CD8-positive, alpha-beta T cell (primary cell): ENCODE measurements at regions of chrX and their contacts with region 1.

Region 1: DNA sequence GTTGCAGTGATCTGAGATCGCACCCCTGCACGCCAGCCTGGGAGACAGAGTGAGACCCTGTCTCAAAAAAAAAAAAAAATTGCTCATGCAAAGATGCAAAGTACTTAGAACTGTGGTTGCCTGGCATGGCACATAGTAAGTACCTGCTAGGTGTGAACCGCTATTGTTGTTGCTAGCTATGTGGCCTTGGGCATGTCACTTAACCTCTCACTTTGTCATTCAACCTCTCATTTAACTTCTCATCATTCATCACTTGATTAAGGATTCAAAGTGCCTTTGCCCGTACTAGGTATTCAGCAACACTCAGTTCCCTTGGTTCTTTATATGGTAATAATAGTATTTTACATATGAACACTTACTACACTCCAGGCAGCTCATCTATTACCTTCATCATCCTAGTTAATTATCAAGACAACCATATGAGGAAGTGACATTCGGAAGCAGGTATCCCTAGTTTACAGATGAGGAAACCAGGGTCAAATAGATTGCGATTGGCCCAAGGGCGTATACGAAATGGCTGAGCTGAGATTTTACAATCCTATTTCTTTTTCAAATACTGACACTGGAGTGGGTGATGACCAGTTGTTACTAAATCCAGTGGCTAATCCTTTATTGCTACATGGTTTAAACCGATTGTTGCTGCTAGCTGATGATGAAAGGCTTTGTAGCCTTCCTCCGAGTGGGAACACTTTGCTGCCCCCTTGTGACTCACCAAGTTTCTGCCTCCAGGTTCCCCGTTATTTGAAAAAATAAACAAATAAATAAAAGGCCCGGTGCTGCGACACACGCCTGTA is 28.8 kb upstream of the SOWAHD start:
- DNase-seq: peak; percentile 28 to 79 (median 67)
- ATAC-seq: peak; percentile 60
- H3K4me3 ChIP-seq: no peak overlapping the region
- H3K4me3 Mint-ChIP-seq: no peak overlapping the region
- H3K27ac ChIP-seq: no peak overlapping the region
- H3K27ac Mint-ChIP-seq: no peak overlapping the region
- H3K4me1 ChIP-seq: peaks cover 5% of the 10 kb centered on the region
- H3K4me1 Mint-ChIP-seq: peaks cover 11% of the 10 kb centered on the region
- H3K27me3 ChIP-seq: no peaks in the 10 kb centered on the region
- H3K27me3 Mint-ChIP-seq: no peaks in the 10 kb centered on the region
- CTCF ChIP-seq: peak; percentile 63

Region 2: GRCh38 chrX:119516157-119516702 is 213.4 kb before region 1 on chrX:
- CTCF ChIA-PET with region 1: interaction called, 22 read pairs
- POLR2A ChIA-PET with region 1: interaction called, 4 read pairs
- intact Hi-C with region 1: loop called (anchors 1 kb)
- DNase-seq: peak in 8 of 9 experiments; percentile 6 to 75 (median 34)
- ATAC-seq: peak; percentile 96
- H3K4me3 ChIP-seq: no peak overlapping the region
- H3K4me3 Mint-ChIP-seq: no peak overlapping the region
- H3K27ac ChIP-seq: no peak overlapping the region
- H3K27ac Mint-ChIP-seq: no peak overlapping the region
- H3K4me1 ChIP-seq: no peaks in the 10 kb centered on the region
- H3K4me1 Mint-ChIP-seq: peaks cover 2% of the 10 kb centered on the region
- H3K27me3 ChIP-seq: no peaks in the 10 kb centered on the region
- H3K27me3 Mint-ChIP-seq: no peaks in the 10 kb centered on the region
- CTCF ChIP-seq: peak; percentile 64

Region 3: DNA sequence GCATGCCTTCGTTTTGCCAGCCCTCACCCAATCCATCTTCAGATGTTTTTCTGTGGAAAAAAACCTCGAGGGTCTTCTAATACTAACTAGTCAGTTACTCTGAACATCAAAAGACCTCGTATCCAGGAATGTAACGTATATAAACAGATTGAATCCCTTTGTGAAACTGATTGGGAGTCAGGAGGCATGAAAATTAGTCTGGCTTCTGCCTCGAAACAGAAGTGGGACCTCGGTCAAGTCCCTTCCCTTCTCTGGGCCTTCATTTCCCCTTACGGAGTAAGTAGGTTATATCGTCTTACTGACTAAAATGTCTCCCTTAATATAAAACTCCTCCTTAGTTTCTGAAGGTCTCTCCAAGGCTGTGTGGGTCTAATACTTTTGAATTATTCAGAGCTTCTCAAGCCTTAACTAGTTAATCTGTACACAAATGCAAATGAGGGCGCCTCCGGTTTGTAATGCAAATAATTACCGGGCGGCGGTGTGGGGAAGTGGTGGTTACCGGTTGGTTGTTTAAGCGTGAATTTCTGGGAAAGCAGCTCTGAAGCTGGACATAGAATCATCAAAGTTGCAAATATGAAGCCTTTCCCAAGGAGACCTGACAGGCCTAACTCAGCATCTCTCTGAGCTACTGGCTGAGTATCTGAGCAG is 112.0 kb before region 1 on chrX:
- CTCF ChIA-PET with region 1: interaction called, 5 read pairs
- POLR2A ChIA-PET with region 1: no interaction called
- intact Hi-C with region 1: loop called in 1 of 2 experiments (anchors 2 kb)
- DNase-seq: no peak
- ATAC-seq: no peak
- H3K4me3 ChIP-seq: no peak overlapping the region
- H3K4me3 Mint-ChIP-seq: no peak overlapping the region
- H3K27ac ChIP-seq: no peak overlapping the region
- H3K27ac Mint-ChIP-seq: no peak overlapping the region
- H3K4me1 ChIP-seq: no peaks in the 10 kb centered on the region
- H3K4me1 Mint-ChIP-seq: peaks cover 13% of the 10 kb centered on the region
- H3K27me3 ChIP-seq: no peaks in the 10 kb centered on the region
- H3K27me3 Mint-ChIP-seq: no peaks in the 10 kb centered on the region
- CTCF ChIP-seq: no peak

Region 4: DNA sequence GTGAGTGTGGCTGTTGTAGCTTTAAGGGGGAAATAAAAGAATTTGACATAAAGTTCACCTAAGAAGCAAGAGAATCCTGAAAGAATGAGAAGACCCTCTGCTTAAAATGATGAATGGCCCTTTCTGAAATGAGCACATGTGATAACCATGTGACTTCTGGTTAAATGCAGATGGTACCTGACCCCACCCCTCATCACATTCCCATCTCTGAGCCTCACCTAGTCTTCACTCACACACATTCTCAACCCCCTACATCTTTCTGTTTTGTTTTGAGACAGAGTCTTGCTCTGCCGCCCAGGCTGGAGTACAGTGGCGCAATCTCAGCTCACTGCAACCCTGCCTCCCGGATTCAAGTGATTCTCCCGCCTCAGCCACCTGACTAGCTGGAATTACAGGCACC is 68.1 kb before region 1 on chrX:
- CTCF ChIA-PET with region 1: interaction called, 11 read pairs
- POLR2A ChIA-PET with region 1: no interaction called
- intact Hi-C with region 1: loop called in 1 of 2 experiments (anchors 5 kb)
- DNase-seq: no peak
- ATAC-seq: no peak
- H3K4me3 ChIP-seq: no peak overlapping the region
- H3K4me3 Mint-ChIP-seq: no peak overlapping the region
- H3K27ac ChIP-seq: no peak overlapping the region
- H3K27ac Mint-ChIP-seq: no peak overlapping the region
- H3K4me1 ChIP-seq: peaks cover 5% of the 10 kb centered on the region
- H3K4me1 Mint-ChIP-seq: peaks cover 30% of the 10 kb centered on the region
- H3K27me3 ChIP-seq: no peaks in the 10 kb centered on the region
- H3K27me3 Mint-ChIP-seq: no peaks in the 10 kb centered on the region
- CTCF ChIP-seq: no peak

Region 5: GRCh38 chrX:119753571-119754257 is 24.1 kb after region 1 on chrX:
- CTCF ChIA-PET with region 1: interaction called, 18 read pairs
- POLR2A ChIA-PET with region 1: interaction called, 7 read pairs
- intact Hi-C with region 1: no loop called
- DNase-seq: peak in 8 of 9 experiments; percentile 15 to 88 (median 56)
- ATAC-seq: peak; percentile 64
- H3K4me3 ChIP-seq: no peak overlapping the region
- H3K4me3 Mint-ChIP-seq: peak overlapping the region; percentile 61
- H3K27ac ChIP-seq: peak overlapping the region; percentile 37 to 77
- H3K27ac Mint-ChIP-seq: peak overlapping the region; percentile 97
- H3K4me1 ChIP-seq: peaks cover 44% of the 10 kb centered on the region
- H3K4me1 Mint-ChIP-seq: peaks cover 47% of the 10 kb centered on the region
- H3K27me3 ChIP-seq: no peaks in the 10 kb centered on the region
- H3K27me3 Mint-ChIP-seq: no peaks in the 10 kb centered on the region
- CTCF ChIP-seq: peak; percentile 58

Region 6: DNA sequence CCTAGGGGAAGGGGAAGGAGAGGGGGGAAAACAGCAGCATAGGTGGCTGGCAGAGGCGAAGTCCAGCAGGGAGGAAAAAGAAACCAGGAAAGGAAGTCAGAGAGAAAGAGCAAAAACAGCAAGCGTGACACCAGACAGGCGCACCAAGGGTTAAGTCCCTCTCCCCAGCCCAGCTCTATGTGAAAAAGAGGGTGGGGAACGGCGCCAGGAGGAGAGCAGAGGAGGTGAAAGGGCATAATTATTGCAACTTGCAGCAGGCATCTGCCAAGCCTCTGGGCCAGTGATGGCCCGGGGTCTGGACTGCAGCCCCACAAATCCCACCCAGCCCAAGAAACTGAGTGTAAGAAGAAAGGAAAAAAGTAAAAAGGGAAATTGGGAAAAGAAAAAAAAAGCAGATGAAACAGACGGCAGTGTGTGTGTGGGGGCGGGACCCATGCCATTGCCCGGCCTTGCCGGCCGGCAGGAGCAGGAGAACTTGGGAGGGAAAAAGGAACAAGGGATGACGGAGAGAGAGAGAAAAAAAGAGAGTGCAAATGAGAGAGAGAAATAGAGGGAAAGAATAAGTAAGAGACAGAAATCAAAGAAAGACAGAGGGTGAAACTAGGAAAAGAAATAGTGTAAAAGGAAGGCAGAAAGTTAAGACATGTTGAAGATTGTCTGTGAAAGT is 414.7 kb after region 1 on chrX:
- CTCF ChIA-PET with region 1: no interaction called
- POLR2A ChIA-PET with region 1: no interaction called
- intact Hi-C with region 1: no loop called
- DNase-seq: no peak
- ATAC-seq: no peak
- H3K4me3 ChIP-seq: no peak overlapping the region
- H3K4me3 Mint-ChIP-seq: no peak overlapping the region
- H3K27ac ChIP-seq: no peak overlapping the region
- H3K27ac Mint-ChIP-seq: no peak overlapping the region
- H3K4me1 ChIP-seq: no peaks in the 10 kb centered on the region
- H3K4me1 Mint-ChIP-seq: peaks cover 15% of the 10 kb centered on the region
- H3K27me3 ChIP-seq: no peaks in the 10 kb centered on the region
- H3K27me3 Mint-ChIP-seq: no peaks in the 10 kb centered on the region
- CTCF ChIP-seq: no peak